Ascending aorta (tissue), 2 donors: ENCODE measurements at regions of chr15 and their contacts with region 1.

Region 1: DNA sequence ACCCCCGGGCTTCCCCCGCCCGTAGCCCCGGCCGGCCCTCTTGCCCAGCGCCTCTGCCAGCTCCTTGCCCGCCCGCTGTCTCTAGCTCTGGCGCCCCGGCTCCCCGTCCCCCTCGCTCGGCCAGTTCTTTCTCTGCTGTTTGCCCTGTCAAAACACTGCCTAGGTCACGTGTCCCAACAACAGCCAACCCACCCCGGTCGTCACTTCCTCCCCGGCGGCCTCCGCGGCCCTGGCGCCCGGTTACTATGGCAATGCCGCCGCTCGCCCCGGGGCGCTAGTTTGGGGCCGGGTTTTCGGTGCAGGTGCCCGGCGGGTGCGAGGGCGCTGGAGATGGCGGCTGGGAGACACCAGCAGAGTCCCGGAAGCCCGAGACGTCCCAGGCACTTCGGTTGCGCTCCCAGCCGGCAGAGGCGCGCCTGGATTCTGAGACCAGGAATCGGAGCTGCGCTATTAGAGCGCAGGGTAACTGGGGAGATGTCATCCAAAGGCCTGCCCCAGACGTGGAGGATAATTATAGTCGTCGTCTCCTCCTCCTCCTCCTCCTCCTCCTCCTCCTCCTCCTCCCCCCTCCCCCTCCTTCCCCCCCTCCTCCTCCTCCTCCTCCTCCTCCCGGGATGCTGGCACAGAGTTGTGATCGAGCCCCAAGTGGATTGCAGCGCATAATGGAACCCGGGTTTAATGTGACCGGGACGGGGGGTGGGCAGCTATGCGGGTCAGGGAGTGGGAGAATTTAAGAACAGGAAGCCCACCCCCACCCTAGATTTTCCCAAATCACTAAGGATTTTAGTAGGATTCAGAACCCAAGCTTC is at the start of gene ATOSA:
- DNase-seq: peak; percentile 72 to 95
- H3K4me3 ChIP-seq: peak within 1 kb of the TSS; percentile 82 to 84
- H3K27ac ChIP-seq: peak within 1 kb of the TSS; percentile 96 to 97
- H3K4me1 ChIP-seq: peaks cover 4 to 12% of the 10 kb centered on the region in 2 donors
- H3K27me3 ChIP-seq: no peaks in the 10 kb centered on the region
- CTCF ChIP-seq: no peak
- total RNA-seq, gene ATOSA: 29.9 TPM

Region 2: GRCh38 chr15:52018693-52019387 is 660.6 kb before region 1 on chr15 and contains the start of gene MAPK6:
- intact Hi-C with region 1: loop called (anchors 2 kb)
- DNase-seq: peak; percentile 78 to 97
- H3K4me3 ChIP-seq: peak within 1 kb of the TSS; percentile 71 to 82
- H3K27ac ChIP-seq: peak within 1 kb of the TSS; percentile 88 to 92
- H3K4me1 ChIP-seq: peaks cover 5 to 13% of the 10 kb centered on the region in 2 donors
- H3K27me3 ChIP-seq: no peaks in the 10 kb centered on the region
- CTCF ChIP-seq: no peak
- total RNA-seq, gene MAPK6: 32.1 TPM

Region 3: DNA sequence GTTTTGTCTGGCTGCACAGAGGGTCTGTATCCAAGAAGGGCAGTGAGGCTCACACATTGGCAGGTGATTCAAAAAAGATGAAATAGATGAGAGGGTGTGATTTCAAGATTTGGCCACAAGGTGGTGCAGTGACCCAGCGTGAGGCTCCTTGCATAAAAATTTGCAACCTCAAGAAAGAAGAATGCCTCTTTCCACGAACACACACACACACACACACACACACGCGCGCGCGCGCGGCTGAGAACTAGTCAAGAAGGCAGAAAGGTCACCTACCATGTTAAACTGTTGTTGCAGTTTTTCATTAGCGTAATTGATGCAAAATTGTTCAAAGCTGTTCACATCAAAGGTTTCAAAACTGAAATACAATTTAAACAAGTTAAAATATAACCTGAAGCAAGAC is 423.1 kb before region 1 on chr15:
- intact Hi-C with region 1: loop called (anchors 2 kb)
- DNase-seq: peak; percentile 21 to 91
- H3K4me3 ChIP-seq: no peak overlapping the region
- H3K27ac ChIP-seq: no peak overlapping the region
- H3K4me1 ChIP-seq: peaks cover 0 to 8% of the 10 kb centered on the region in 2 donors
- H3K27me3 ChIP-seq: no peaks in the 10 kb centered on the region
- CTCF ChIP-seq: peak; percentile 72 to 75 (median 73)

Region 4: GRCh38 chr15:52463638-52464037 is 215.8 kb before region 1 on chr15:
- intact Hi-C with region 1: no loop called
- DNase-seq: no peak
- H3K4me3 ChIP-seq: no peak overlapping the region
- H3K27ac ChIP-seq: no peak overlapping the region
- H3K4me1 ChIP-seq: no peaks in the 10 kb centered on the region
- H3K27me3 ChIP-seq: no peaks in the 10 kb centered on the region
- CTCF ChIP-seq: no peak

Region 5: GRCh38 chr15:52518490-52519371 is 160.7 kb before region 1 on chr15:
- intact Hi-C with region 1: no loop called
- DNase-seq: no peak
- H3K4me3 ChIP-seq: no peak overlapping the region
- H3K27ac ChIP-seq: no peak overlapping the region
- H3K4me1 ChIP-seq: no peaks in the 10 kb centered on the region
- H3K27me3 ChIP-seq: no peaks in the 10 kb centered on the region
- CTCF ChIP-seq: no peak

Region 6: DNA sequence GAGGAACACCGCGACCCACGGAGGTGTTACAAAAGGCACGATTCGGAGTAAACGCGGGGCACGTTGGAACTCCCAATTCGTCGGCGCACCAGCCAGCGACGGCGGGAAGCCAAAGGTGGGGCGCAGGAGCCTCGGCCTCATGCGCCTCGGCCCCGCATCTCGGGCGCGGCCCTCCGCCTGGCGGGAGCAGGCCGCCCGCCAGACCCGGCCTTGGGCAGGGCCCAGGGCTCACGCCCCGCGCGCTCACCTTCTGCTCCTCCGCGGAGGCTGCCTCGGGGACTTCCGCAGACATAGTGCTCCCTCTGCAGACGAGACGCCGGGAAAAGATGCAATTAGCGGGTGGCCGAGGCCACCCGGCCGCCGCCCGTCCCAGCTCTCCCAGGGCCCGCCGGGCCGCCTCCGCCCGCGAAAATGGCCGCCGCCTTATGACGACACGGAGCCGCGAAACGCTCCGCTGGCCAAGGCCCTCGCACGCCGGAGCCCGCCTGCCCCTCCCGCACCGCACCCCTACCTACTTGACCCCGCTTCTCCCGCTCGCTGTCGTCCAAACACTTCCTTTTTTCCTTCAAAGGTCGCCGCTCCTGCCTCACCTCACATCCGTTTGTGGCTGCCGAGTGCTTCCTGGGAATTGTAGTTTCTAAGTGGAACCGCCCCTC is 110.7 kb before region 1 on chr15 and contains the start of gene ARPP19:
- intact Hi-C with region 1: loop called (anchors 1 kb)
- DNase-seq: peak; percentile 62 to 94
- H3K4me3 ChIP-seq: peak within 1 kb of the TSS; percentile 81 to 88
- H3K27ac ChIP-seq: peak within 1 kb of the TSS; percentile 93 to 96
- H3K4me1 ChIP-seq: peaks cover 3 to 17% of the 10 kb centered on the region in 2 donors
- H3K27me3 ChIP-seq: no peaks in the 10 kb centered on the region
- CTCF ChIP-seq: peak in 1 of 3 experiments; percentile 21
- total RNA-seq, gene ARPP19: 71.7 TPM

Region 7: DNA sequence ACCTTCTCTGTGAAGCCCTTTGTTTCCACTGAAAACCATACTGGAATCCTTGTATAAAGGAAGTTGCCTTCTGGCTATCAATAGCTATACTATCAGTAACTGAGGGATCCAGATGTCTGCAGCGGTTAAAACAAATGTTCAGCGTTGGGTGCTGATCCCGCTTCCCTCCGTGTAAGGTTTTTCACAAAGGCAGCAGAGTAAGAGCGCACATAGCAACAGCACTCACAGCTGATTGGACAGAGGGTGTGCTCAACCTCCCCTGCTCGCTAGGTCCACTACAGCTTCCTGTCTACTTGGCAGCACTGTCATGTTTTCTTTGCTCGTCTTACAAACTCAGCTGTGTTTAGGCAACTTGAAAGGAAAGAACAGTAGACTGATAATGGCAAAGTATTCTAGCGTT is 27.6 kb before region 1 on chr15:
- intact Hi-C with region 1: loop called (anchors 2 kb)
- DNase-seq: peak in 1 of 2 donors; percentile 69
- H3K4me3 ChIP-seq: peak overlapping the region; percentile 27 to 51
- H3K27ac ChIP-seq: peak overlapping the region; percentile 60 to 66
- H3K4me1 ChIP-seq: peaks cover 2 to 16% of the 10 kb centered on the region in 2 donors
- H3K27me3 ChIP-seq: no peaks in the 10 kb centered on the region
- CTCF ChIP-seq: no peak